Transverse colon (tissue), 4 donors: ENCODE measurements at regions of chr7 and their contacts with region 1.

Region 1: GRCh38 chr7:50142425-50143017 is 49.5 kb upstream of the ZPBP start:
- DNase-seq: no peak
- H3K4me3 ChIP-seq: no peak overlapping the region
- H3K27ac ChIP-seq: no peak overlapping the region
- H3K4me1 ChIP-seq: peaks cover 0 to 4% (median 0%) of the 10 kb centered on the region in 4 donors
- H3K27me3 ChIP-seq: no peaks in the 10 kb centered on the region
- CTCF ChIP-seq: peak; percentile 55 to 73 (median 63)
- EP300 ChIP-seq: no peak
- POLR2A ChIP-seq: no peak

Region 2: DNA sequence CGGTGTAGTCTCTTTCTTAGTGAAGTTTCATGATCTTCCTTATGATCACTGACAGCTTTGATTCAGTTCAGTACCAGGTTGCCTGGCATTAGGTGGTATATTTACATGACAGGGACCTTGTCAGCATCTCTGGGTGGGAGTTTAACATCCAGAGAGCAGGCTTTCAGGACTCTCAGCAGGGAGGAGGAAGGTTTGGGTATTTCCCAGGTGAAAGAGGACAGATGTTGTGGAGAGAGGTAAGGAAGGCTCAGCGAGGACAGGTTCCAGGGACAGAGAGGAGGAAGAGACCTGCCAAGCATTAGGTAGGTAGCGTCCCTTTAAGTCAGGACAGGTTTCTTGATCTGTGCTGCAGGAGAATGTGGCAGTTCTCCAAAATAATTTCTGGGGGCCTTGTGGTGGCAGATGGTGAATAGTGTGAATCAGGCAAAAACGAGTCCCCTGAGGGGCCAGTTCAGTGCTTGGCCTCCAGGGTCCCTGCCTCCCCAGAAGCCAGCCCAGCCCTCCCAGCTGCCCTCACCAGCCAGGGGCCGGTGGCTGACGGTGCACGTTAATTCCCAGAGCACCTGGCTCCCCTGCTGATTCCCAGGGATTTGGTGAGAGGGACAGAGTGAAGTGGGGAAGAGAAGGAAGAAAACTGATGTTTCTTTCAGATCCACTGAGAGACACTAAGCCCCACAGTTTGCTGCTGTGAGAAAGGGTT is 287.1 kb before region 1 on chr7:
- in situ Hi-C with region 1: no loop called
- intact Hi-C with region 1: no loop called
- DNase-seq: no peak
- H3K4me3 ChIP-seq: no peak overlapping the region
- H3K27ac ChIP-seq: no peak overlapping the region
- H3K4me1 ChIP-seq: no peaks in the 10 kb centered on the region
- H3K27me3 ChIP-seq: no peaks in the 10 kb centered on the region
- CTCF ChIP-seq: no peak
- EP300 ChIP-seq: no peak
- POLR2A ChIP-seq: no peak

Region 3: GRCh38 chr7:50426280-50427045 is 283.9 kb after region 1 on chr7:
- in situ Hi-C with region 1: loop called in 1 of 4 experiments (anchors 10 kb)
- intact Hi-C with region 1: no loop called
- DNase-seq: no peak
- H3K4me3 ChIP-seq: no peak overlapping the region
- H3K27ac ChIP-seq: no peak overlapping the region
- H3K4me1 ChIP-seq: no peaks in the 10 kb centered on the region
- H3K27me3 ChIP-seq: no peaks in the 10 kb centered on the region
- CTCF ChIP-seq: no peak
- EP300 ChIP-seq: no peak
- POLR2A ChIP-seq: no peak

Region 4: GRCh38 chr7:50449881-50450589 is 307.5 kb after region 1 on chr7 and contains the start of gene FIGNL1:
- in situ Hi-C with region 1: no loop called
- intact Hi-C with region 1: no loop called
- DNase-seq: peak; percentile 79
- H3K4me3 ChIP-seq: peak within 1 kb of the TSS; percentile 49 to 87 (median 72)
- H3K27ac ChIP-seq: peak within 1 kb of the TSS; percentile 59 to 85 (median 76)
- H3K4me1 ChIP-seq: peaks cover 0 to 16% (median 13%) of the 10 kb centered on the region in 4 donors
- H3K27me3 ChIP-seq: no peaks in the 10 kb centered on the region
- CTCF ChIP-seq: no peak
- EP300 ChIP-seq: no peak
- POLR2A ChIP-seq: peak; percentile 46
- total RNA-seq, gene FIGNL1: 0.80 to 6.2 (median 3.6) TPM

Region 5: GRCh38 chr7:50610521-50611277 is 468.2 kb after region 1 on chr7:
- in situ Hi-C with region 1: no loop called
- intact Hi-C with region 1: no loop called
- DNase-seq: no peak
- H3K4me3 ChIP-seq: no peak overlapping the region
- H3K27ac ChIP-seq: no peak overlapping the region
- H3K4me1 ChIP-seq: peaks cover 0 to 9% (median 5%) of the 10 kb centered on the region in 4 donors
- H3K27me3 ChIP-seq: no peaks in the 10 kb centered on the region
- CTCF ChIP-seq: no peak
- EP300 ChIP-seq: no peak
- POLR2A ChIP-seq: no peak